Heart left ventricle (tissue), 16 donors: ENCODE measurements at regions of chr15 and their contacts with region 1.

Region 1: DNA sequence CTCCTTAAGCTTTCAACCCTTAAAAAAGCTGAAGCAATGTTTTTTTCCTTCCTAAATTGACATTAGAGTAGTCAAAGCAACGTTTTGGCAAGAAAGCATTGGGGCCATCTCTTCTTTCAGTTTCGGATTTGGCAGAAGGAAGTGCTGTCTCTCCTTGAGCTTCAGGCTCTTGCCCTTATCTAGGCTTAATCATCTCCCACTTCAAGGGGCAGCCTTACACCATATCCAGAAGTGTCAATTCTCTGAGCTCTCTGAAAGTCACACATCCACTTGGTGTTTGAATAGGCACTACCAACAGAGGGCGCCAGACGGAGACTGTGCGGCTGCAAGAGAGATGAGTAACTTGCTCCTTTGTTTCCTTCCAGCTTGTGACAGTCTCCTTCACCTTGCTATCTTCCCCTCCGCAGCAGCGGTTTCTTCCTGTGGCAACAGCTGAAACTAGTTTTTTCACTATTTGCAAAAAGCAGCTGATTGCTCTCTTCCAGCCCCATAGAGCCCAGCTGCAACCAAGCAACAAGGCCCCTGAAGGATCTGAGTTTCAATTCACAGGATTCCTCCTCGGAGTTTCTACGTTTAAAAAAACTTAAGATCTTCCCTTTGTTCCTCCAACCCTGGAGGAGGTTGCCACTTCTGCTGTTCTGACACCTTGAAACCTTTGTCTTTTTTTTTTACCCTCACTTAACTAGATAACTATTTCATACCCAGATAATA is 147.0 kb upstream of the SLCO3A1 start:
- DNase-seq: peak; percentile 74 to 81 (median 75)
- ATAC-seq: peak; percentile 53 to 92 (median 89)
- H3K4me3 ChIP-seq: peak overlapping the region in 3 of 12 donors; percentile 3 to 28 (median 13)
- H3K27ac ChIP-seq: peak overlapping the region in 5 of 12 donors; percentile 2 to 81 (median 33)
- H3K4me1 ChIP-seq: peaks cover 0 to 26% (median 1%) of the 10 kb centered on the region in 12 donors
- H3K27me3 ChIP-seq: no peaks in the 10 kb centered on the region
- CTCF ChIP-seq: peak; percentile 80 to 94 (median 90)
- POLR2A ChIP-seq: no peak

Region 2: GRCh38 chr15:91942676-91943576 is 236.4 kb after region 1 on chr15:
- intact Hi-C with region 1: loop called in 3 of 10 experiments (anchors 10 kb)
- DNase-seq: peak in 4 of 5 donors; percentile 81 to 87 (median 86)
- ATAC-seq: peak; percentile 71 to 87 (median 86)
- H3K4me3 ChIP-seq: peak overlapping the region in 8 of 12 donors; percentile 1 to 39 (median 23)
- H3K27ac ChIP-seq: peak overlapping the region in 11 of 12 donors; percentile 30 to 86 (median 66)
- H3K4me1 ChIP-seq: peaks cover 12 to 98% (median 83%) of the 10 kb centered on the region in 12 donors
- H3K27me3 ChIP-seq: no peaks in the 10 kb centered on the region
- CTCF ChIP-seq: no peak
- POLR2A ChIP-seq: no peak

Region 3: DNA sequence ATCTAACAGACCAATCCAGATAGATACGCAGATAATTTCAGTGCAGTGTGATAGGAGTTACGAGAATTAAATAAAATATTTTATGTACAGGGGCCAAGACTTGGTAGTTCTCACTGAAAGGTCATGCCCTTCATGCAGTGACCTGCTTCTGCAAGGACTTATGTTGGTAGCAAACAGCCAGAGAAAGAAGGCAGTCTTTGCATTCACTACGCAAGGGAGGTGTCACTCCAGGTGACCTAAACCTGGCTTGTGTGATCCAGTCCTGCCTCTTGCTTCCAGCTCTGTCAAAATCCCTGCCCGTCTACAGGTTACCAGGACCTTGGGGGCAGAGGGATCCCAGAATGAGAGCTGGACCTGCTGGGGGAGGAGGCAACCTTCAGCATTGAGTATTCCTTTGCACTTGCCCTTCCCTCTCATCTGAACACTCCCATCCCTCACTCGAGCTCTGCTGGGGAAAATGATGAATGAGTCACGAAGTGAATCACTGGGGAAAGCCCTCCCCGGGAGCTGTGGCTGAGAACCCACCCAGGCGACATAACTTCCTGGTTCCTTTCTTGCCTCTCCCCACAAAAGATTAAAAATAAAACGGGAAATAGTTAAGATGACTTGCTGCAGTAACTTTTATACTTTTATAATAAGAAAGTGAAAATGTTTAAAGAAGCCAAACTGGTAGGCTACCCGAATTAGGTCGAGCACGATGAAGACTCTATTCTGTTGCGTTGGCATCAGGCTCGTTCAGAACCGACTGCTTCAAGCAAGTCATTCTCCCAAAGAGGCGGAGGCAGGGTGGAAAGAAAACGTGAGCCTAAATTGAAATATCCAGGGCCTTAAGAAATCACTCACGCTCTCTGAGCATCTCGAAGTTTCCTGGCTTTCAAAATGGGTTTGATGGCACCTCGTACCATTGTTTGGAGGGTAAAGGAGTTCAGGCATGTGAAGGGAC is 363.1 kb after region 1 on chr15:
- intact Hi-C with region 1: loop called in 1 of 10 experiments (anchors 5 kb)
- DNase-seq: peak in 4 of 5 donors; percentile 58 to 74 (median 64)
- ATAC-seq: peak; percentile 42 to 86 (median 82)
- H3K4me3 ChIP-seq: peak overlapping the region in 9 of 12 donors; percentile 2 to 51 (median 31)
- H3K27ac ChIP-seq: peak overlapping the region in 11 of 12 donors; percentile 25 to 87 (median 65)
- H3K4me1 ChIP-seq: peaks cover 0 to 75% (median 52%) of the 10 kb centered on the region in 12 donors
- H3K27me3 ChIP-seq: no peaks in the 10 kb centered on the region
- CTCF ChIP-seq: no peak
- POLR2A ChIP-seq: no peak

Region 4: GRCh38 chr15:92087211-92087610 is 380.7 kb after region 1 on chr15:
- intact Hi-C with region 1: loop called in 8 of 10 experiments (anchors 1 to 5 kb)
- DNase-seq: no peak
- ATAC-seq: no peak
- H3K4me3 ChIP-seq: no peak overlapping the region
- H3K27ac ChIP-seq: no peak overlapping the region
- H3K4me1 ChIP-seq: peaks cover 0 to 29% (median 16%) of the 10 kb centered on the region in 12 donors
- H3K27me3 ChIP-seq: no peaks in the 10 kb centered on the region
- CTCF ChIP-seq: no peak
- POLR2A ChIP-seq: no peak